Calu3 (cell line): ENCODE measurements at regions of chr1 and their contacts with region 1.

Region 1: GRCh38 chr1:225700164-225700740 is 47.3 kb upstream of the ENAH start:
- DNase-seq: peak; percentile 76
- H3K4me3 Mint-ChIP-seq: peak overlapping the region; percentile 51
- H3K27ac Mint-ChIP-seq: peak overlapping the region; percentile 85
- H3K4me1 Mint-ChIP-seq: peaks cover 22% of the 10 kb centered on the region
- H3K27me3 Mint-ChIP-seq: no peaks in the 10 kb centered on the region
- CTCF ChIP-seq: no peak

Region 2: DNA sequence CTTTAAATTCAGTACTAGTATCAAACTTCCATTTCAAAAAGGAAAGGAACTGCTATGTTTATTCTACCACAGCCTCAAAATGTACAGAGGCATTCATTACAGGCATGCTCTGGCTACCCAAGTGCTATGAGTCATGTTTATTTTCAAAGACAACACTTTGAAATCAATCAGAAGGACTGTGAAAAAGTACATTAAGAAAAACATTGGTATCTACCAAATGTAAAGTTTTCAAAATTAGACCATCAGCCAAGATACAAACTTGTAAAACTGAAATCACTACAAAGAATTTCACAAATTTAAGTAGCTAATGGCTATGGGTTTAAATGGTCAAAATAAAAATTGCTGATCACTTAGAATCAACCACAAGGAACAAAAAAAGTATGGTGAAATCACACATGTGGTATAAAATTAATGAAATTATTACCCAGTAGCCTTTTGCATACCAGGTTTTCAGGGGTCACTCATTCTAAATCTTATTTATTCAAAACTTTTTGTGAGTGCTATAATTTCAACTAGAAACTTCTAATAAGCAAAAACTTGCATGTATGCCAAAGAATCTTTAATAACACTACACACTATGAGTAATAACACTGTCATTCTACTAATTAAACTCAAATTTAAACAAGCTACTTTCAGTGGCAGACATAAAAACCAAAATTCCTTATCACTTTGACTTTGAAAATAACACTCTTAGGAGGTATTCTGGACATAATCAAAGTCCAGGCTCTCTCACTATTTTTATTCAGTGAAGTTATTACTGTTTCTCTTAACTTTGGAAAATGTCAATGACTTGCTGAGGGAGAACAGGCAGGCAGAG is 96.5 kb before region 1 on chr1:
- CTCF ChIA-PET with region 1: interaction called, 3 read pairs
- intact Hi-C with region 1: loop called (anchors 5 kb)
- DNase-seq: peak; percentile 27
- H3K4me3 Mint-ChIP-seq: peak overlapping the region; percentile 47
- H3K27ac Mint-ChIP-seq: peak overlapping the region; percentile 74
- H3K4me1 Mint-ChIP-seq: peaks cover 61% of the 10 kb centered on the region
- H3K27me3 Mint-ChIP-seq: no peaks in the 10 kb centered on the region
- CTCF ChIP-seq: no peak

Region 3: DNA sequence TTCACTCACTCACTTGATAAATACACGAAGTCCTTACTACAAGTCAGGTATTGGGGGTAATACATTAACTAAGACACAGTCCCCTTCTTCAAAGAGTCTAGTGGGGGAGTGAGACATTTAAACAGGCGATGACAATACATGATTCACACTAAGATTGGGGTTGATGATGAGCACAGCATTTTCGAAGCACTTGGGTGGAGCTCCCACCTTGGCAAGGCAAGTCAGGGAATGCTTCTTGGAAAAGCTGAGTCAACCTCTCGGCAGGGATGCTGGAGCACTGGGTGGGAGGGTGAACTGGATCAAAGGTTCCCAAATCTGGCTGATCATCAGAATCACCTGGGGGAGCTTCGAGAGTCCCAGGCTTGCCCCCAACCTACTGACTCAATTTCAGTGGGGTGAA is 10.6 kb after region 1 on chr1:
- CTCF ChIA-PET with region 1: interaction called, 12 read pairs
- intact Hi-C with region 1: no loop called
- DNase-seq: no peak
- H3K4me3 Mint-ChIP-seq: no peak overlapping the region
- H3K27ac Mint-ChIP-seq: no peak overlapping the region
- H3K4me1 Mint-ChIP-seq: peaks cover 8% of the 10 kb centered on the region
- H3K27me3 Mint-ChIP-seq: no peaks in the 10 kb centered on the region
- CTCF ChIP-seq: no peak

Region 4: GRCh38 chr1:225746361-225747179 is 46.3 kb after region 1 on chr1:
- CTCF ChIA-PET with region 1: interaction called, 14 read pairs
- intact Hi-C with region 1: loop called (anchors 5 kb)
- DNase-seq: peak; percentile 81
- H3K4me3 Mint-ChIP-seq: peak overlapping the region; percentile 54
- H3K27ac Mint-ChIP-seq: peak overlapping the region; percentile 71
- H3K4me1 Mint-ChIP-seq: peaks cover 23% of the 10 kb centered on the region
- H3K27me3 Mint-ChIP-seq: no peaks in the 10 kb centered on the region
- CTCF ChIP-seq: no peak